ENCODE measurements at regions of chr1 and their contacts with region 1.

Region 1: DNA sequence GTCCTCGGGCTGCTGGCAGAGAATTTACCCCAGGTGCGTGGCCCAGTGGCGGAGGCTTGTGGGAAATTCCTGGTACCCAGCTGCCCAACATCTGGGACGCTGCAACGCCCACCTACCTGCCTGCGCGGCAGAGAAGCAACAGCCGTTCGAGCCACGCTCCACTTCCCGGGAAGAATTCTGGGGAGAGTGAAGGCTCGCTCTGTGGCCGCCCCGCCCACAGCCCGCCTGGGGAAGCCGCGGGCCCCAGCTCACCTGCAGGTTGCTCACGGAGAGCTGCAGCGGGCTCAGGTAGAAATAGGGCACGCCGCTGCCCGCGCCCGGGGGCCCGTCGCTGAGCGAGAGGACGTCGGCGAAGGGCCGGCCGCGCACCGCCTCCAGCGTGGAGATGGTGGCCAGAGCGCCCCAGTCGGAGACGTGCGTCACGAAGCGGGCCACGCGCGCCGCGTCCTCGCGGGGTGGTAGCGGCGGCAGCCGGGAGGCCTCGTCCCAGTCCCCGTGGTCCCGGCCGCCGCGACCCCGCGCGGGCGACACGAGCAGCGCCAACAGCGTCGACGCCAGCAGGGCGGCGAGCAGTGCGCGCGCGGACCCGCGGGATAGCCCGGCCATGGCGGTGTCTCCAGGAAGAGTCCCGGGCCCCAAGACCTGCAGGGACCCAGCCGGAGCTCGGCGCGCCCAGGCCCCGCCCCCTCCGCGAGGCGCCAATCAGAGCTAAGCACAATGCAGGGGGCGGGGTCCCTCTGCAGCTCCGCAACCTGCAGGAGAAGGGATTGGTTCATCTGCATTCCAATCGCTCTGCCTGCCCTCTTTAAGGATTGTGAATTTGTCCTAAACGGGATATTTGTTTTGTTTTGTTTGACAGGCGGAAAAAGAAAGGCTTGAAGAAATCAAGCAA is at the start of gene CREG1:
- DNase-seq: peak; percentile 92
- H3K4me3 Mint-ChIP-seq: peak within 1 kb of the TSS; percentile 78
- H3K27ac Mint-ChIP-seq: peak within 1 kb of the TSS; percentile 33
- H3K4me1 Mint-ChIP-seq: peaks cover 45% of the 10 kb centered on the region
- H3K27me3 Mint-ChIP-seq: peaks cover 6% of the 10 kb centered on the region
- total RNA-seq, gene CREG1: 19.5 TPM

Region 2: DNA sequence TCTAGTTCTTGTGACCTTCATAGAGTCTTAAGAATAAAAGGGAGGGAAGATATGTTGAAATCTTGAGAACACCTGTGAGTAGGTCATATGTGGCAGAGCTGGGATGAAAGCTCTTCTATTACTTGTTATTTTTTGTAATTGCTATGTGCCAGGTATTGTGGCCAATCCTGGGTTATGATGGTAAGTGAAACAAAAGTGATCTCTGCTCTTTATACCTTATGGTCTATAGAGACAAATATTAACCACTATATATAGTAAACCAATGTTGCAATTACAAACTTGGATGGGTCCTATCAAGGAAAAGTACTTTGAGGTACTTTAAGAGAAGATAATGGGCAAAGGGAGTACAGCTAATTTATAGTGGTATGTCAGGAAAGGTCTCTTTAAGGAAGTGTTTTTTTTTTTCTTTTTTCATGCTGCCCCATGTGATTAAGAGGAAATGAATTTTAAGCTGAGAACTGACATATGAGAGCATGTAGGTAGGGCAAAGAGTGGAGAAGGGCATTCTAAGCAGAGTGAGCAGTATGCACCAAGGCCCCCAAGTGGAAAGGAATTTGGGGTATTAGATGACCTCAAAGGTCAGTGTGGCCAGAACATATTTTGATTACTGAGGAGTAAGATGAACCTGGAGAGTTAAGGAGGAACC is 289.4 kb before region 1 on chr1:
- CTCF ChIA-PET with region 1: interaction called, 12 read pairs
- POLR2A ChIA-PET with region 1: no interaction called
- DNase-seq: no peak
- H3K4me3 Mint-ChIP-seq: no peak overlapping the region
- H3K27ac Mint-ChIP-seq: no peak overlapping the region
- H3K4me1 Mint-ChIP-seq: peaks cover 20% of the 10 kb centered on the region
- H3K27me3 Mint-ChIP-seq: no peaks in the 10 kb centered on the region

Region 3: GRCh38 chr1:167563579-167564246 is 10.3 kb after region 1 on chr1:
- CTCF ChIA-PET with region 1: interaction called, 12 read pairs
- POLR2A ChIA-PET with region 1: interaction called, 3 read pairs
- DNase-seq: no peak
- H3K4me3 Mint-ChIP-seq: no peak overlapping the region
- H3K27ac Mint-ChIP-seq: no peak overlapping the region
- H3K4me1 Mint-ChIP-seq: peaks cover 6% of the 10 kb centered on the region
- H3K27me3 Mint-ChIP-seq: peaks cover 6% of the 10 kb centered on the region

Region 4: DNA sequence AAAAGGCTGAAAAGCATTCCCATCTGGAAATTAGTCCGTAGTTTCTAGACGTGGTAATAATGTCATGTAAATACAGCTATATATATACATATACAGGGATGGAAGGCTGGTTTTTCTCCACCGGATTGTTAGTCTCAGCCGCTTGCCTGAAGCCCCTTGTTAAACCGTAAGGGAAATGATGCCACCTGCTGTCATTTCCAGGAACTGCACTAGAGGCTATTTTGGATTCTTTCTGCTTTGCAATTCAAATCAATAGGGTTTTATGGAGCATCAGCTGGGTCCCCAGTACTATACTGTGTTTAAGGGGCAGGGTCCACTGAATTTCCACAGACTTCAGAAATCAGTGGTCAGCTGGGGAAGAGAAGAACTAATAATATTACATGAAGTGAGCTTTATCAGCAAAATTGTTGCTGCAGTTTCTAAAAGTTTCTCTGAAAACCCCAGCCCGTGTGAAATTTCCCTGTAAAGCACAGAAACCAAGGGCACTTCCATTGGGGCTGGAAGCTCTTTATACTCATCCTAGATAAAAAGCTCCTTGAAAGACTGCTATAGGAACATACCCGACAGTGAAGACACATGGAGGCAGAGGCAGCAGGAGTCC is 134.6 kb after region 1 on chr1:
- CTCF ChIA-PET with region 1: interaction called, 19 read pairs
- POLR2A ChIA-PET with region 1: no interaction called
- DNase-seq: peak; percentile 79
- H3K4me3 Mint-ChIP-seq: no peak overlapping the region
- H3K27ac Mint-ChIP-seq: peak overlapping the region; percentile 30
- H3K4me1 Mint-ChIP-seq: peaks cover 13% of the 10 kb centered on the region
- H3K27me3 Mint-ChIP-seq: no peaks in the 10 kb centered on the region